ENCODE measurements at regions of chr7 and their contacts with region 1.

Region 1: DNA sequence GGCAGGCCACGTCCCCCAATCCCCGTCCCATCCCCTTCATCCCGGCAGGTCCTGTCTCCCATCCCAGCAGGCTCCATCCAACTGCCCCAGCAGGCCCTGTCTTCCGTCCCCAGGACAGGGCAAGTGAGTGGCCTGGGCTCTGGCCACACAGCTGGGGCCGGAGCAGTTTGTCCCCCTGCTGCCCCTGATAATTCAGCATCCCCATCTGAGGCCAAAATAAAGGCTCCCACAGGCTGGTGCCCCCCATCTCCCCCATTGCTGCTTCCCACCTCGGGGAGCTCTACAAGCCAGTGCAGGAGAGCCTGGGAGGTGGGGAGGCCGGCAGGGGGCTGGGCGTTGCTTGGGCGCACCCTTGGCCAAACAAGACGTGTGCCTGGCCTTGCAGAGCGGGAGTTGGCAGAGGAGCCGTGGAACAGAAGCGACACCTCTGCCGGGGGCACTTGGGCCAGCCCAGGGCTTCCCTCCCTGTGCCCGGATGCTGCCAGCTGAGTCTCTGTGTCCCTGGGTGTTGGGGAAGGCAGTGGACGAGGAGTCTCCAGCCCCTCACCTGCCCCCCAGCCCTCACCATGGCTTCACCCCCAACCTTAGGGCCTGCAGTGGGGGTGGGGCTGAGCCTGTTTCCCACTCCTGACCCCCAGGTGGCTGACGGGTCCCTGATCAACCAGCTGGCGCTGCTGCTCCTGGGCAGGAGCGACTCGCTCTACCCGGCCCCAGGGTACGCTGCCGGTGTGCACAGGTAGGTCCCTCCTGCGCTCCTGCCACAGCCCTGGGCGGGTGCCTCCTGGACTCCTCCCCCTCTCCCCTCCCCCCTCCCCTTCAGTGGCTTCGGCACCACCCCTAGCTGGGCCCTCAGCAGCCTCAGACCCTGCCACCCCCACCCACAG is 14.0 kb downstream of the AP5Z1 start:
- DNase-seq: no peak
- H3K4me3 ChIP-seq: no peak overlapping the region
- H3K27ac ChIP-seq: no peak overlapping the region
- H3K4me1 ChIP-seq: no peaks in the 10 kb centered on the region
- H3K27me3 ChIP-seq: no peaks in the 10 kb centered on the region
- CTCF ChIP-seq: no peak

Region 2: DNA sequence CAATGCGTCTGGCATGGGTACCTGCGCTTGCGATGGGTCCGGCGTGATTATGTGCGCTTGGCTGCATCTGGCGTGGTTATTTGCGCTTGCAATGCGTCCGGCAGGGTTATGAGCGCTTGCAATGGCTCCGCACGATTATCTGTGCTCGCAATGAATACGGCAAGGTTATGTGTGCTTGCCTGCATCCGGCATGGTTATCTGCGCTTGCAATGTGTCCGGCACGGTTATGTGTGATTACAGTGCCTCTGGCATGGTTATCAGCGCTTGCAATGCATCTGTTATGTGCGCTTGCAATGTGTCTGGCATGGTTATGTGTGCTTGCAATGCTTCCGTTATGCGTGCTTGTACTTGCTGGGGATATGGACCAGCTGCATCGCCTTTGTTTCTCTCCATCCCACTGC is 293.9 kb after region 1 on chr7:
- intact Hi-C with region 1: loop called (anchors 10 kb)
- DNase-seq: no peak
- H3K4me3 ChIP-seq: no peak overlapping the region
- H3K27ac ChIP-seq: no peak overlapping the region
- H3K4me1 ChIP-seq: peaks cover 0 to 3% (median 0%) of the 10 kb centered on the region in 3 donors
- H3K27me3 ChIP-seq: no peaks in the 10 kb centered on the region
- CTCF ChIP-seq: no peak